MCF 10A (cell line): ENCODE measurements at regions of chr10 and their contacts with region 1.

Region 1: DNA sequence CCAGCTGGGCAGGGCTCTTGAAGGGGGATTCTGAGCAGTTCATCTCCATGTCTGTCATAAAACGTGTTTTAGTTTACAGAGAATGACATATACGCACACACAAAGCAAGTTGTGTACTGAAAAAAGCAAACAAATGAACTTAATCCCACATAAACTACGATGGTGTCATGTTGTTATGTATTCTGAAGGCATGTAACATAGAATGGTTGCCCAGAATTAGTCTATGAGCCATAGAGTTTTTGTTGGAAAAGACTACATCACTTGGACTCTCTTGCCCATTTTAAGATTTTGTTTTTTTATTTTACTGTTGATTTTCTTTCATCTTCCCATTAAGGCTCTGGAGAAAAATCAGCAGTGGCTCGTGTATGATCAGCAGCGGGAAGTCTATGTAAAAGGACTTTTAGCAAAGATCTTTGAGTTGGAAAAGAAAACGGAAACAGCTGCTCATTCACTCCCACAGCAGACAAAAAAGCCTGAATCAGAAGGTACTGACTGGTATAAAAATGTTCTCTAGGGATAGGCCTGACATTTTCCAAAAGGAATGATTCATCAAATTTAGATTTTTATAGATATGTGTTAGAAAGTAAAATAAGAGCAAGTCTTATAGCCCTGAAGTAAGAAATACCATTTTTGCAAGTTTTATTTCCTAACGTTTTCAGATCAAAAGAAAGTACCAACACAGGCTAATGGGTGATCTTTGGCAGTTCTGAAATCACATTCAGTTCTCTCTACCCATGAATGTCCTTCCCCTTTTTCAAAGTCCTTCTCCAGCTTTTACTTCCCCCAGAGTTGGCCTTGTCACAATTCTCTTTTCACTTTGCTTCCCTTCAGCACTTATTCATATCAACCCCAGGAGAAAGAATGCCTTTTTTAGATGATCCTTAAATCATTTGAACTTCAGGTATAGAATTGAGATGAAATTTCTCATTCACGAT is 18.9 kb downstream of the CEP55 start:
- DNase-seq: no peak
- H3K4me3 Mint-ChIP-seq: no peak overlapping the region
- H3K27ac Mint-ChIP-seq: peak overlapping the region; percentile 1
- H3K4me1 Mint-ChIP-seq: peaks cover 7% of the 10 kb centered on the region
- H3K27me3 Mint-ChIP-seq: no peaks in the 10 kb centered on the region
- CTCF ChIP-seq: no peak

Region 2: GRCh38 chr10:93080350-93081046 is 434.8 kb before region 1 on chr10:
- CTCF ChIA-PET with region 1: interaction called, 6 read pairs
- POLR2A ChIA-PET with region 1: no interaction called
- intact Hi-C with region 1: loop called (anchors 5 kb)
- DNase-seq: peak; percentile 57
- H3K4me3 Mint-ChIP-seq: peak overlapping the region; percentile 29
- H3K27ac Mint-ChIP-seq: peak overlapping the region; percentile 72
- H3K4me1 Mint-ChIP-seq: peaks cover 5% of the 10 kb centered on the region
- H3K27me3 Mint-ChIP-seq: peaks cover 17% of the 10 kb centered on the region
- CTCF ChIP-seq: peak; percentile 86

Region 3: DNA sequence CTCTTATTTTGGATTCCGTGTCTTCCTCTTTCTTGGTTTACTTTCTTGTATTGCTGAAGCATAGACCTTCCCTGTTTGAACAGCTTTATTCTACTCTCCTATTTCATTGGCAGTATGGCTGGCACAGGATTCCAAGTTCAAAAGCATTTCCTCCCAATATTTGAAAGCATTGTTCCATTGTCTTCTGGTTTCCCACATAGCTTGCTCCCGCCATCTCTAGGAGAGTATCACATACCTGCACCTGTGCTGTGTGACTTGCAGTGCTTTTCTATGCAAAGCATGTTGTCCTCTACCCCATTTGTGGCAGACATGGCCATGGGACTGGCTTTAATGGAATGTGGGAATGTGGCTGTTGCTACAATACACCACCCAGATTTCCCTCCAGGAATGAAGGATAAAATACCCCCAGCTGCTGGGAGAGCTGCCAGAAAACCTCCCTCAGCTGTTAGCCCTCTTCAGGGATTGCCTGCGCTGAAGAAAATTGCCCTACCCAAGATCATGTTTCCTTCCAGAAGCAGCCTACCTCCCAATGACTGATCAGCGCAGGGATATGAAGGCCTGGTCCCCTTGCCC is 26.3 kb before region 1 on chr10:
- CTCF ChIA-PET with region 1: interaction called, 27 read pairs
- POLR2A ChIA-PET with region 1: interaction called, 3 read pairs
- intact Hi-C with region 1: no loop called
- DNase-seq: no peak
- H3K4me3 Mint-ChIP-seq: no peak overlapping the region
- H3K27ac Mint-ChIP-seq: no peak overlapping the region
- H3K4me1 Mint-ChIP-seq: no peaks in the 10 kb centered on the region
- H3K27me3 Mint-ChIP-seq: no peaks in the 10 kb centered on the region
- CTCF ChIP-seq: no peak

Region 4: GRCh38 chr10:93503075-93503474 is 12.3 kb before region 1 on chr10:
- CTCF ChIA-PET with region 1: interaction called, 37 read pairs
- POLR2A ChIA-PET with region 1: interaction called, 4 read pairs
- intact Hi-C with region 1: no loop called
- DNase-seq: no peak
- H3K4me3 Mint-ChIP-seq: no peak overlapping the region
- H3K27ac Mint-ChIP-seq: no peak overlapping the region
- H3K4me1 Mint-ChIP-seq: peaks cover 27% of the 10 kb centered on the region
- H3K27me3 Mint-ChIP-seq: no peaks in the 10 kb centered on the region
- CTCF ChIP-seq: no peak

Region 5: GRCh38 chr10:93535293-93535692 is 20.0 kb after region 1 on chr10:
- CTCF ChIA-PET with region 1: interaction called, 14 read pairs
- POLR2A ChIA-PET with region 1: no interaction called
- intact Hi-C with region 1: no loop called
- DNase-seq: no peak
- H3K4me3 Mint-ChIP-seq: no peak overlapping the region
- H3K27ac Mint-ChIP-seq: no peak overlapping the region
- H3K4me1 Mint-ChIP-seq: no peaks in the 10 kb centered on the region
- H3K27me3 Mint-ChIP-seq: peaks cover 42% of the 10 kb centered on the region
- CTCF ChIP-seq: no peak

Region 6: GRCh38 chr10:93615576-93616235 is 100.4 kb after region 1 on chr10:
- CTCF ChIA-PET with region 1: no interaction called
- POLR2A ChIA-PET with region 1: no interaction called
- intact Hi-C with region 1: no loop called
- DNase-seq: no peak
- H3K4me3 Mint-ChIP-seq: no peak overlapping the region
- H3K27ac Mint-ChIP-seq: no peak overlapping the region
- H3K4me1 Mint-ChIP-seq: no peaks in the 10 kb centered on the region
- H3K27me3 Mint-ChIP-seq: peaks cover 16% of the 10 kb centered on the region
- CTCF ChIP-seq: no peak